ENCODE measurements at regions of chr16 and their contacts with region 1.

Region 1: GRCh38 chr16:89217388-89218191 is at the start of gene ZNF778:
- DNase-seq: peak; percentile 82 to 84
- ATAC-seq: peak; percentile 94 to 97 (median 96)
- H3K4me3 ChIP-seq: peak within 1 kb of the TSS; percentile 76 to 99 (median 94)
- H3K27ac ChIP-seq: peak within 1 kb of the TSS; percentile 91 to 99 (median 96)
- H3K4me1 ChIP-seq: peaks cover 0 to 33% (median 29%) of the 10 kb centered on the region in 9 donors
- H3K27me3 ChIP-seq: no peaks in the 10 kb centered on the region
- CTCF ChIP-seq: no peak
- total RNA-seq, gene ZNF778: 5.9 to 11.3 (median 8.8) TPM

Region 2: DNA sequence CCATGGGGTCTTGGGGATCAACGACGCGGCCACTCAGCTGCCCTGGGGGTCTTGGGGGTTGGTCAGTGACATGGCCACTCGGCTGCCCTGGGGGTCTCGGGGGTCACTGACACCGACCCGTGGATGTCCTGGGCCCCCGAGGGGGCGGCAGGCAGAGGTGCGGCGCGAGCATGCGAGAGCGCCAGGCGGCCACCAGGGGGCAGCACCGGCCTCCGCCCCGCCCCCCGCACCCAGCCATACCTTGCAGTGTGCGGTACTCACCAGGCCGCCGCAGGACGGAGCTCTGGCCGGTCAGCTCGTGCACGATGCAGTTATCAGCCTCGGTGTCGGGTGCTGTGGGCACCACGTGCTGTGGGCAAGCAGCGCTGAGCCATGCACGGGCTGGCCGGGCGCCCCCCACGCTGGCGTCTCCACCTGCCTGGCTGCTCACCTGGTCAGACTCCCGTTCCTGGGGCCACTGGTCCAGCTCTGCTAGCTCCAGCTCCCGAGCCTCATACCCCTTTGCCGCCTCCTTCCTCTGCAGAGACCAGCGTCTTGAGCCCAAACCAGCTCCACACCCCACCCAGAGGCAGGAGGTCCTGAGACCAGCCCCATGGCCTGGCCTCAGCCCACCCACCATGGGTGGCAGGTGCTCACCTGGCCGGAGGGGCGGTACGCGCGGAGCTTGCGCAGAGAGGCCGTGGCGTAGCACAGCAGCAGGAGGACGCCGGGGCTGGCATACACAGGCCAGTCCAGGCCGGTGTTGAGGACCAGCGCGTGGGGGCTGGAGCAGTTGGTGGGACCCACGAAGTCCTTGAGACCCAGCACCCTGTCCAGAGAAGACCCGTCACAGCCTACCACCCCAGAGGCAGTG is 480.1 kb before region 1 on chr16:
- intact Hi-C with region 1: loop called in 7 of 10 experiments (anchors 5 to 10 kb)
- DNase-seq: peak; percentile 42 to 76
- ATAC-seq: peak; percentile 65 to 83 (median 76)
- H3K4me3 ChIP-seq: no peak overlapping the region
- H3K27ac ChIP-seq: no peak overlapping the region
- H3K4me1 ChIP-seq: peaks cover 0 to 10% (median 4%) of the 10 kb centered on the region in 9 donors
- H3K27me3 ChIP-seq: no peaks in the 10 kb centered on the region
- CTCF ChIP-seq: peak; percentile 95 to 99 (median 98)

Region 3: DNA sequence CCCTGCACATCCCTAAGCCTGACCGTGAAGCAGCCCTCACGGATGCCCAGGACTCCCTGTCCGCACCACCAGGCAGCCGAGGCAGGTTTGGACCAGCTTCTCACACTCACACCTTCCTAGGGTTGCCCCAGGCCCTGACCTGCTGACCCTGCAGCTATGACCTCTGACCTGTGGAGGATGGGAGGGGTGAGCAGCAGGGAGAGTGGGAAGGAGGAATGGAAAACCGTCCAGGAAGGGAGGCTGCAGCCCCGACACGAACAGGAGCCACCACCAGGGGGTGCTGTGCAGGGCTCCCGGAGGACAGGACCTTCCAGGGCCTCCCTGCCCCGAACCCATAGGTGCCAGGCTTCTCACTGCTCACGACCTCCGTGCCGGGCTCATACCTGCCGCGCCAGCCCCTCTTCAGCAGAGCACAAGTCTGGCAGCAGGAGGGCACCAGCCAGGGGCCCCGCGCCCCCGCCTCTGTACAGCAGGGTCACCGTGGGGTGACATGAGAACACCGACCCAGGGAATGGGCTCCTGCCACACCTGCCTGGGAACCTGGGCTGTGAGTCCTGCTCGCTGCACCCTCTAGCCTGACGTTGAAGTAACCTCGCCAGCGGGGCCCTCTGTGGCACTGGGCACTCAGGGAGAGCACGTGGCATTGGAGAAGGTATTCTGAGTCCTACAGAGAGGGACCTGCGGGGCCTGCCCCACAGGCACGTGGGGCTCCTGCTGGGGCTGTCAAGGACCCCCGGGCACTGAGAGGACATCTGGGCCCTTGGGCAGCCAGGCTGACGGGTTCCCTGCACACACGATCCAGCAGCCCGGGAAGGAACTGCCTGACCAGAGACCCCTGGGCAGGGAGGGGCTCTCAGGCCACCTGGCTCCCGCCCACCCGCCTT is 473.7 kb before region 1 on chr16:
- intact Hi-C with region 1: loop called in 7 of 10 experiments (anchors 5 to 10 kb)
- DNase-seq: peak; percentile 78 to 87
- ATAC-seq: peak; percentile 43 to 71 (median 65)
- H3K4me3 ChIP-seq: peak overlapping the region in 2 of 10 donors; percentile 12 to 13
- H3K27ac ChIP-seq: peak overlapping the region in 8 of 10 donors; percentile 8 to 81 (median 51)
- H3K4me1 ChIP-seq: peaks cover 11 to 47% (median 33%) of the 10 kb centered on the region in 9 donors
- H3K27me3 ChIP-seq: no peaks in the 10 kb centered on the region
- CTCF ChIP-seq: peak; percentile 84 to 94 (median 89)

Region 4: DNA sequence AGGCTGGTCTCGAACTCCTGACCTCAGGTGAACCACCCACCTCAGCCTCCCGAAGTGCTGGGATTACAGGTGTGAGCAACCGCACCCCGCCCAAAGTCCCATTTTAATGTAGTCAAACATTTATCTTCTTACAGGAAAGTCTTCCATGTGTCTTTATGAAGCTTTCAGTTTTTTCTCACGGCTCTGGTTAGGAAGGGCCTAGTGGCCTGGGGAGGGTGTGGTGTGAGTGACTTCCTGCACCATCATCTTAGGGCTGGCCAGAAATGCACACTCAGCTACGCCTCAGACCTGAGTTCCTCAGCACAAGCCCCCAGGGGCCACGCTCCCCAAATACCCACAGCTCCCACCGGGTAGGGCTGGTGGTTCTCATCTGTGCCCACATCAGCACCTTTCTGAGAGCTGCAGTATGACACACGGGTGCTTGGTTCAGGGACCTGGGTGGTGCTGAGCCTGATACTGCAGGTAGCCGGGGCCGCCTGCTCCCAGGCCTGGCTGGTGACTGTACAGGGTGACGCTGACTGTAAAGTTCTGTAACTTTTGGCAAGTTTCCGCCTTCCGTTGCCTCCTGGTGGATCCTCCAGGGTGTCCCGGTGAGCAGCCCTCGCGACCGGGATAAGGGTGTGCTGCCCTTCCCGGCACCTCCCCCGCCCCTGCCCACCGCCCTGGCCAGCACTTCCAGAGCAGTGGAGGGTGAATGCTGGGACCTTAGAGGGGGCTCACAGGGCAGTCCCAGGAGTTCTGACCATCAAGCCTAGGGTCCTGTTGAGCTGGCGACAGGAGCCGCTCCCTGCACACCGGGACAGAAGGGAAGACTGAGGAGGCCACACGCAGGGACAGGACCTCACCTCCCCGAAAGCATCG is 52.4 kb after region 1 on chr16:
- intact Hi-C with region 1: no loop called
- DNase-seq: no peak
- ATAC-seq: peak in 1 of 8 donors; percentile 10
- H3K4me3 ChIP-seq: no peak overlapping the region
- H3K27ac ChIP-seq: no peak overlapping the region
- H3K4me1 ChIP-seq: no peaks in the 10 kb centered on the region
- H3K27me3 ChIP-seq: no peaks in the 10 kb centered on the region
- CTCF ChIP-seq: no peak

Region 5: GRCh38 chr16:89574681-89575246 is 357.2 kb after region 1 on chr16:
- intact Hi-C with region 1: no loop called
- DNase-seq: peak in 1 of 2 donors; percentile 51
- ATAC-seq: peak; percentile 44 to 71 (median 60)
- H3K4me3 ChIP-seq: peak overlapping the region in 9 of 10 donors; percentile 14 to 46 (median 36)
- H3K27ac ChIP-seq: no peak overlapping the region
- H3K4me1 ChIP-seq: peaks cover 11 to 22% (median 17%) of the 10 kb centered on the region in 9 donors
- H3K27me3 ChIP-seq: peaks cover 33 to 69% (median 62%) of the 10 kb centered on the region in 7 donors
- CTCF ChIP-seq: peak; percentile 19 to 80 (median 64)